ENCODE measurements at regions of chr10 and their contacts with region 1.

Region 1: GRCh38 chr10:75210282-75211006 is at the start of gene VDAC2:
- DNase-seq: peak; percentile 91 to 98 (median 94)
- ATAC-seq: peak; percentile 81
- H3K4me3 ChIP-seq: peak within 1 kb of the TSS; percentile 73
- H3K4me3 Mint-ChIP-seq: peak within 1 kb of the TSS; percentile 97
- H3K27ac ChIP-seq: peak within 1 kb of the TSS; percentile 99
- H3K27ac Mint-ChIP-seq: peak within 1 kb of the TSS; percentile 99
- H3K4me1 ChIP-seq: peaks cover 28% of the 10 kb centered on the region
- H3K4me1 Mint-ChIP-seq: peaks cover 28% of the 10 kb centered on the region
- H3K27me3 ChIP-seq: no peaks in the 10 kb centered on the region
- H3K27me3 Mint-ChIP-seq: no peaks in the 10 kb centered on the region
- CTCF ChIP-seq: no peak
- total RNA-seq, gene VDAC2: 141 to 147 TPM

Region 2: GRCh38 chr10:75111367-75111906 is 99.0 kb before region 1 on chr10 and contains the start of gene SAMD8:
- CTCF ChIA-PET with region 1: no interaction called
- POLR2A ChIA-PET with region 1: interaction called, 49 read pairs
- intact Hi-C with region 1: loop called in 1 of 2 experiments (anchors 2 kb)
- DNase-seq: peak; percentile 90 to 99 (median 94)
- ATAC-seq: peak; percentile 80
- H3K4me3 ChIP-seq: peak within 1 kb of the TSS; percentile 97
- H3K4me3 Mint-ChIP-seq: peak within 1 kb of the TSS; percentile 88
- H3K27ac ChIP-seq: peak within 1 kb of the TSS; percentile 92 to 95
- H3K27ac Mint-ChIP-seq: peak within 1 kb of the TSS; percentile 90
- H3K4me1 ChIP-seq: peaks cover 26% of the 10 kb centered on the region
- H3K4me1 Mint-ChIP-seq: peaks cover 62% of the 10 kb centered on the region
- H3K27me3 ChIP-seq: no peaks in the 10 kb centered on the region
- H3K27me3 Mint-ChIP-seq: no peaks in the 10 kb centered on the region
- CTCF ChIP-seq: no peak
- total RNA-seq, gene SAMD8: 34.1 to 37.4 TPM

Region 3: GRCh38 chr10:75165684-75166622 is 44.5 kb before region 1 on chr10:
- CTCF ChIA-PET with region 1: interaction called, 3 read pairs
- POLR2A ChIA-PET with region 1: interaction called, 10 read pairs
- intact Hi-C with region 1: no loop called
- DNase-seq: peak in 4 of 14 experiments; percentile 8 to 73 (median 40)
- ATAC-seq: peak; percentile 51
- H3K4me3 ChIP-seq: peak overlapping the region; percentile 19
- H3K4me3 Mint-ChIP-seq: peak overlapping the region; percentile 58
- H3K27ac ChIP-seq: peak overlapping the region; percentile 56 to 71
- H3K27ac Mint-ChIP-seq: peak overlapping the region; percentile 78
- H3K4me1 ChIP-seq: peaks cover 25% of the 10 kb centered on the region
- H3K4me1 Mint-ChIP-seq: peaks cover 42% of the 10 kb centered on the region
- H3K27me3 ChIP-seq: no peaks in the 10 kb centered on the region
- H3K27me3 Mint-ChIP-seq: no peaks in the 10 kb centered on the region
- CTCF ChIP-seq: no peak

Region 4: GRCh38 chr10:75176046-75176445 is 34.4 kb before region 1 on chr10:
- CTCF ChIA-PET with region 1: no interaction called
- POLR2A ChIA-PET with region 1: no interaction called
- intact Hi-C with region 1: no loop called
- DNase-seq: peak in 1 of 14 experiments; percentile 19
- ATAC-seq: no peak
- H3K4me3 ChIP-seq: no peak overlapping the region
- H3K4me3 Mint-ChIP-seq: no peak overlapping the region
- H3K27ac ChIP-seq: no peak overlapping the region
- H3K27ac Mint-ChIP-seq: no peak overlapping the region
- H3K4me1 ChIP-seq: no peaks in the 10 kb centered on the region
- H3K4me1 Mint-ChIP-seq: peaks cover 12% of the 10 kb centered on the region
- H3K27me3 ChIP-seq: no peaks in the 10 kb centered on the region
- H3K27me3 Mint-ChIP-seq: no peaks in the 10 kb centered on the region
- CTCF ChIP-seq: no peak

Region 5: GRCh38 chr10:75187961-75188426 is 22.4 kb before region 1 on chr10:
- CTCF ChIA-PET with region 1: interaction called, 24 read pairs
- POLR2A ChIA-PET with region 1: interaction called, 51 read pairs
- intact Hi-C with region 1: loop called (anchors 1 to 2 kb)
- DNase-seq: peak; percentile 55 to 89 (median 64)
- ATAC-seq: peak; percentile 97
- H3K4me3 ChIP-seq: no peak overlapping the region
- H3K4me3 Mint-ChIP-seq: no peak overlapping the region
- H3K27ac ChIP-seq: peak overlapping the region in 1 of 2 donors; percentile 47
- H3K27ac Mint-ChIP-seq: peak overlapping the region; percentile 95
- H3K4me1 ChIP-seq: peaks cover 7% of the 10 kb centered on the region
- H3K4me1 Mint-ChIP-seq: peaks cover 8% of the 10 kb centered on the region
- H3K27me3 ChIP-seq: no peaks in the 10 kb centered on the region
- H3K27me3 Mint-ChIP-seq: no peaks in the 10 kb centered on the region
- CTCF ChIP-seq: peak; percentile 81

Region 6: GRCh38 chr10:75226656-75227055 is 16.2 kb after region 1 on chr10:
- CTCF ChIA-PET with region 1: interaction called, 53 read pairs
- POLR2A ChIA-PET with region 1: interaction called, 208 read pairs
- intact Hi-C with region 1: loop called in 1 of 2 experiments (anchors 1 kb)
- DNase-seq: no peak
- ATAC-seq: no peak
- H3K4me3 ChIP-seq: no peak overlapping the region
- H3K4me3 Mint-ChIP-seq: no peak overlapping the region
- H3K27ac ChIP-seq: peak overlapping the region in 1 of 2 donors; percentile 32
- H3K27ac Mint-ChIP-seq: peak overlapping the region; percentile 53
- H3K4me1 ChIP-seq: peaks cover 19% of the 10 kb centered on the region
- H3K4me1 Mint-ChIP-seq: peaks cover 66% of the 10 kb centered on the region
- H3K27me3 ChIP-seq: no peaks in the 10 kb centered on the region
- H3K27me3 Mint-ChIP-seq: no peaks in the 10 kb centered on the region
- CTCF ChIP-seq: no peak